Activated B cell treated with CpG ODN at 0.5 μM for 24 hours (primary cell): ENCODE measurements at regions of chr11 and their contacts with region 1.

Region 1: DNA sequence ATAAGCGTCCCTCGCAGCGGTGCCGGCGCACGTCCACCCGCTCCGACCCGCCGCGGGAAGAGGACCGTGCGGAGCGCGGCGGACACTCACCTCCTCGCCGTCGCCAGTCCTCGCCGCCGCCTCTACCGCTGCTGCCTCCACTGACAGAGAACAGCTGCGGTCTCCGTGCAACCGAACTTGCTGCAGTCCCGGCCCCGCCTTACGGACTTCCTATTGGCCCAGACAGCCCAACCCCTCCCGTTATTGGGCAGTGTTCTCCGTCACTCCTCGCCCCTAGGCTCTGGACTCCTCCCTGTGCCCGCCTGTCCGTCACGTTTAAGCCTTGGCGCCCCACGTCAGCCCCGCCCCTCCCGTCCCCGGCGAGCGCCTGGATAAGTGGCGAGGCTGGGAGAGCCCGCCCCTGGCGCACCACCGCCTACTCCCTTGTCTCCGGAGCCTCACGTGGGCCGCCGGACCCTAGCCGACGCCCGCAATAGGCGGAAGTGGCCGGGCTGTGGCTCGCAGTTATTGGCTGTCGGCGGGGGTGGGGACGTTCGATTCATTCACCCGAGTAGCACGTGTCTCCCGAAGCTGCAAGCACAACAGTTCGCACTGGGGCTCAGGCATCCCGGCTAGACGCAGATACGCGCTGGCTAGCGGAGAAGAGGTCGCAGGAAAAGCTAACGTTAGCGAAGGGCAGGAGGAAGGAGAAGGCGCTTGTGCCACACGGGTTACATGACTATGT is at the start of gene PC:
- DNase-seq: peak; percentile 87
- ATAC-seq: peak; percentile 97
- H3K4me3 Mint-ChIP-seq: peak within 1 kb of the TSS; percentile 83
- H3K27ac Mint-ChIP-seq: peak within 1 kb of the TSS; percentile 81
- H3K4me1 Mint-ChIP-seq: peaks cover 20% of the 10 kb centered on the region
- H3K27me3 Mint-ChIP-seq: peaks cover 3% of the 10 kb centered on the region
- CTCF ChIP-seq: no peak
- total RNA-seq, gene PC: 4.3 and 5.0 TPM in 2 replicates

Region 2: GRCh38 chr11:66268283-66268951 is 690.0 kb before region 1 on chr11 and contains the start of gene RAB1B:
- CTCF ChIA-PET with region 1: no interaction called
- POLR2A ChIA-PET with region 1: no interaction called
- intact Hi-C with region 1: loop called (anchors 5 kb)
- DNase-seq: peak; percentile 98
- ATAC-seq: peak; percentile 76
- H3K4me3 Mint-ChIP-seq: peak within 1 kb of the TSS; percentile 90
- H3K27ac Mint-ChIP-seq: peak within 1 kb of the TSS; percentile 97
- H3K4me1 Mint-ChIP-seq: peaks cover 32% of the 10 kb centered on the region
- H3K27me3 Mint-ChIP-seq: no peaks in the 10 kb centered on the region
- CTCF ChIP-seq: no peak
- total RNA-seq, gene RAB1B: 115 and 118 TPM in 2 replicates

Region 3: GRCh38 chr11:66371627-66372415 is 586.6 kb before region 1 on chr11 and contains the start of gene SLC29A2:
- CTCF ChIA-PET with region 1: no interaction called
- POLR2A ChIA-PET with region 1: no interaction called
- intact Hi-C with region 1: loop called (anchors 5 kb)
- DNase-seq: peak; percentile 78
- ATAC-seq: peak; percentile 87
- H3K4me3 Mint-ChIP-seq: peak within 1 kb of the TSS; percentile 90
- H3K27ac Mint-ChIP-seq: peak within 1 kb of the TSS; percentile 94
- H3K4me1 Mint-ChIP-seq: peaks cover 15% of the 10 kb centered on the region
- H3K27me3 Mint-ChIP-seq: no peaks in the 10 kb centered on the region
- CTCF ChIP-seq: no peak
- total RNA-seq, gene SLC29A2: 13.5 and 17.1 TPM in 2 replicates

Region 4: DNA sequence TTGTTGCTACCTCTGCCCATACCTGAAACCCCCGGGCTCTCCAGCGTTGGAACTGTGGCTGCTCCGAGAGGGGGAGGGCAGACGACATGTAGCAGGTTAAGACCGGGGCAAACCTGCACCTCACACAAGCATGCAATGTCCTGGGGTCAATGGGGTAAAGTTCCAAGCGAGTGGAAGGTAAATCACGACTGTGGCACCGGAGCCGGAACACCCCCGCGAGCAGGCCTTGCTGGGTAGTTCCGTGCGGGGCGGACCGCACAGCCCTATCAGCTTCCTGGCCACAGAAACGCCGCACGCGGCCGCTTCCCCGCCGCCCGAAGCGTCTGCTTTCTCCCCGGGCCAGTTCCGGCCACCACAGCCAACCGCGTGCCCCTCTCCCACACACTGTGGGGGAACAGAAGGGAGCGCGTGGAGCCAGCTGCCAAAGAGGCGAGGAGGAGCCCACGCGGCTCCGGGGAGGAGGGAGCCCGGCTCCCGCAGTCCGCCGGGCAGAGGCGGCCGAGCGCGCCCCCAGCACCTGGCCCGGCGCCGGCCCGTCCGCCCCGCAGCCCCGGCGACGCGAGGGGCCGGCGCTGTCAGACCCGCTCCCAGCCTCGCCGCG is 231.0 kb before region 1 on chr11:
- CTCF ChIA-PET with region 1: no interaction called
- POLR2A ChIA-PET with region 1: no interaction called
- intact Hi-C with region 1: loop called (anchors 5 kb)
- DNase-seq: peak; percentile 40
- ATAC-seq: peak; percentile 64
- H3K4me3 Mint-ChIP-seq: peak overlapping the region; percentile 78
- H3K27ac Mint-ChIP-seq: no peak overlapping the region
- H3K4me1 Mint-ChIP-seq: peaks cover 18% of the 10 kb centered on the region
- H3K27me3 Mint-ChIP-seq: peaks cover 35% of the 10 kb centered on the region
- CTCF ChIP-seq: no peak

Region 5: DNA sequence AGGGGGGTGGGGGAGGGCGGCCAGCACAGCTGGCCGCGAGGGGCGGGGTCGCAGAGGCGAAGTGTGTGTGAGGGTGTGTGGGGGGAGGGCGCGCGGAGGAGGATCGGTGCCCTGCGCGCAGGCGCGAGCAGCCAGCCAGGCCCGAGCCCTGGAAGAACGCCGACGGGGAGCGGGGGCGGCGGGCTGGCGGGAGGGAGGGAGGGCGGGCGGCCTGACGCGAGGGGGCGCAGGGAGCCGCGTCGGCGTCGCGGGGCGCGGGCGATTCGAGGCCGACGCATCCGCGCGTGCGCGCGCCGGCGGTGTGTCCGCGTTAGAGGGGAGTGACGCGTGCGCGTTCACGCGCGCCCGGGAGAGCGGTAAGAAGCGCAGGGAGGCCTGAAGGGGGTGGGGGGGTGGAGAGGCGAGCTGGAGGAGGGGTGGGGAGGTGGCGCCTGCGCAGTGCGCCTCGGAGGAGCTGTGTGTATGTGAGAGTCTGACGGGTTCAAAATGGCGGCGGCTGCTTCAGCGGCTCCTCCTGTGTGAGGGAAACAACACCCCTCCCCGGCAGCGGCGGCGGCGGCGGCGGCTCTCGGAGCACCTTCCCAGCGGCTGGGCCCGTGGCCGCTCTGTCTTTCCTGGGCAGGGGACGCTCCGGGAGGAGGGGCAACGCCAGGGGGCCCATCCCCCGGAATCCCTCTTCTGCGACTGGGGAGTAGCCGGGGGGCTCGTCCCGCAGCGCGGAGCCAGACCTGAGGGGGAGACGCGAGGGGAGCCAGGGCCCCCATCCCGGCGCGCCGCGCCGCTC is 160.6 kb after region 1 on chr11 and contains the start of gene KDM2A:
- CTCF ChIA-PET with region 1: no interaction called
- POLR2A ChIA-PET with region 1: no interaction called
- intact Hi-C with region 1: loop called (anchors 1 kb)
- DNase-seq: peak; percentile 93
- ATAC-seq: peak; percentile 76
- H3K4me3 Mint-ChIP-seq: peak within 1 kb of the TSS; percentile 91
- H3K27ac Mint-ChIP-seq: peak within 1 kb of the TSS; percentile 91
- H3K4me1 Mint-ChIP-seq: peaks cover 36% of the 10 kb centered on the region
- H3K27me3 Mint-ChIP-seq: no peaks in the 10 kb centered on the region
- CTCF ChIP-seq: no peak
- total RNA-seq, gene KDM2A: 141 and 160 TPM in 2 replicates

Region 6: GRCh38 chr11:67674442-67674901 is 716.1 kb after region 1 on chr11 and contains the start of gene ALDH3B2:
- CTCF ChIA-PET with region 1: no interaction called
- POLR2A ChIA-PET with region 1: no interaction called
- intact Hi-C with region 1: no loop called
- DNase-seq: no peak
- ATAC-seq: no peak
- H3K4me3 Mint-ChIP-seq: no peak within 1 kb of the TSS
- H3K27ac Mint-ChIP-seq: no peak within 1 kb of the TSS
- H3K4me1 Mint-ChIP-seq: no peaks in the 10 kb centered on the region
- H3K27me3 Mint-ChIP-seq: peaks cover 22% of the 10 kb centered on the region
- CTCF ChIP-seq: no peak
- total RNA-seq, gene ALDH3B2: not detected in 2 replicates